Activated CD4-positive, alpha-beta T cell treated with anti-CD3 and anti-CD28 coated beads, Interleukin-2, amount 10 ng/mL, durations not matched to agents 24 days and 14 days (primary cell): ENCODE measurements at regions of chr12 and their contacts with region 1.

Region 1: GRCh38 chr12:15590180-15590826 is 198.9 kb downstream of the EPS8 start:
- DNase-seq: peak; percentile 85
- H3K4me3 Mint-ChIP-seq: peak overlapping the region; percentile 74
- H3K27ac Mint-ChIP-seq: peak overlapping the region; percentile 39
- H3K4me1 Mint-ChIP-seq: peaks cover 10% of the 10 kb centered on the region
- H3K27me3 Mint-ChIP-seq: peaks cover 5% of the 10 kb centered on the region

Region 2: DNA sequence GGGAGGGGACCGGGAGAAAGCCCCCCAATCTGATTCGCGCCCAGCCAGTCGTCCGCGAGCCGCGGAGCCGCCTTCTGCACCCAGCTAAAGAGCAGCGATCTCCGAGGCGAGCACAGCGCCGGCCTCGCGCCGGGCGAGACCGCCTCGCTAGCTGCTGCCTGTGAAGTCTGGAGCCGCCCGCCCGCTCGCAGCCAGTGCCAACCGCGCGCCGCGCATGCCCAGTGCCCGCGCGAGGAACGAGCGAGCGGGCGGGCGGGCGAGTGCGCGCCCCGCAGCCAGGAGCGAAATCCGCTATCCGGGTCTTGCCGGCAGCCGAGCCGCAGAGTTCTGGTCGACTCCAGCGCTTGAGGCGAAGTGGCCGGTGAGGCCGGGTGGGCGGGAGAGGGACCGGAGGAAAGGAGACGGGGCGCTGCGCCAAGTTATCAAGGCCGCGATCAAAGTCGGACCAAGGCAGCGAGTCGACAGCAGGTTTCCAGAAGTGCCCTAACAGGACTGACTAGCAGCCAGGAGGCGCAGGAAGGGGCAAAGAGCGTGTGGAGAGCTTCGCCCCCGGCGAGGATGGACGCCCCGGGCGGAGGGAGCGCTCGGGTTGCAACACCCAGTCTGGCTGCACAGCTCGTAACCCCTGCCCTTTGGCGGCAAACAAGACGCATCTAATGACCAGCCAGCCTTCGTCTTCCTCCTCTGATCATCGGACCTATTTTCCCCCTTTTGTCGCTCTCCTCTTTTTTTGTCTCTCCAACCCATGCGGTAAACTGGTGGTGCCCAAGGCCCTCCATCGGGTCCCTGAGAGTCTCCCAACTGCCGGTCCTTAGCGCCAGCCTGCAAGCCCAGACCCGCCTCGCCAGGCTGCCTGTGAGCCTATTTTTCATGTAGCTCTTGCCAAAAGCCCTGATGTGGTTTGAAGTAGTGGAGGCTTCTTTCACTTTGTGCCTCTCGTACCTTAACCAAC is 199.2 kb after region 1 on chr12 and contains the start of gene EPS8:
- intact Hi-C with region 1: loop called (anchors 5 kb)
- DNase-seq: peak; percentile 96
- H3K4me3 Mint-ChIP-seq: peak within 1 kb of the TSS; percentile 87
- H3K27ac Mint-ChIP-seq: peak within 1 kb of the TSS; percentile 74
- H3K4me1 Mint-ChIP-seq: peaks cover 12% of the 10 kb centered on the region
- H3K27me3 Mint-ChIP-seq: peaks cover 69% of the 10 kb centered on the region
- total RNA-seq, gene EPS8: 2.2 and 2.4 TPM in 2 replicates

Region 3: GRCh38 chr12:15899282-15899870 is 309.1 kb after region 1 on chr12:
- intact Hi-C with region 1: loop called (anchors 1 kb)
- DNase-seq: no peak
- H3K4me3 Mint-ChIP-seq: no peak overlapping the region
- H3K27ac Mint-ChIP-seq: no peak overlapping the region
- H3K4me1 Mint-ChIP-seq: peaks cover 8% of the 10 kb centered on the region
- H3K27me3 Mint-ChIP-seq: no peaks in the 10 kb centered on the region

Region 4: GRCh38 chr12:16359512-16360491 is 769.5 kb after region 1 on chr12:
- intact Hi-C with region 1: loop called (anchors 5 kb)
- DNase-seq: peak; percentile 72
- H3K4me3 Mint-ChIP-seq: no peak overlapping the region
- H3K27ac Mint-ChIP-seq: no peak overlapping the region
- H3K4me1 Mint-ChIP-seq: no peaks in the 10 kb centered on the region
- H3K27me3 Mint-ChIP-seq: no peaks in the 10 kb centered on the region